ENCODE measurements at regions of chr12 and their contacts with region 1.

Region 1: DNA sequence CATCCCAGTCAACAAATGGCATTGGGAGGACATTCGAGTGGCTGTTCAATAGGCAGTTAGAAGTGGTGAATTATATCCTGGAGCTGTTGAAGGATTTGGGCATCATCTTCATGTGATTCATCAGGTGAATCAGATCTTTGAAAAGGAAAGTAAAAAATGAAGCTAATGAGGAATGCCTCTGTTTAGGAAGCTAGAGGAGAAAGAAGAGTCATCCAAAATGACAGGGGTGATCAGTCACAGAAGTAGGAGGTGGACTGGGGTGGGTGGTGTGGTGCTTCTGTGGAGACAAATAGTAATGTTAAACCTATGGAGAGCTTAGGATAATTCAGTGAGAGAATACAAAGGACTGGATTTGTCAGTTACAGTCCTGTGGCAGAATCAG is 32.7 kb downstream of the DIP2B start:
- DNase-seq: no peak
- CTCF ChIP-seq: no peak

Region 2: DNA sequence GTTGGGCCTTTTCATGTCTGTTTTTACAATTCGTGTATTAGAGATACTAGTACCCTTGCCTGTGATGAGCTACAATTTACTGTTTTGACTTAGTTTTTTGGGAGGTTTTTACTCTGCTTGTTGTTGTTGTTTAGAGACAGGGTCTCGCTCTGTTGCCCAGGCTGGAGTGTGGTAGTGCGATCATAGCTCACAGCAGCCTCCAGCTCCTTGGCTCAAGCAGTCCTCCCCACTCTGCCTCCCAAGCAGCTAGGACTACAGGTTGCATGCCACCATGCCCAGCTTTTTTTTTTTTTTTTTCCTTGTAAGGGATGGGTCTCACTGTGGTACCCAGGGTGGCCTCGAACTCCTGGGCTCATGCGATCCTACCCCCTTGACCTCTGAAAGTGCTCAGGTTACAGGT is 84.7 kb before region 1 on chr12:
- CTCF ChIA-PET with region 1: no interaction called
- POLR2A ChIA-PET with region 1: no interaction called
- DNase-seq: no peak
- CTCF ChIP-seq: no peak

Region 3: GRCh38 chr12:50550530-50551223 is 13.1 kb after region 1 on chr12:
- CTCF ChIA-PET with region 1: interaction called, 13 read pairs
- POLR2A ChIA-PET with region 1: no interaction called
- DNase-seq: no peak
- CTCF ChIP-seq: no peak

Measured in GM10248 (cell line).